Posterior cingulate gyrus (tissue), 11 donors: ENCODE measurements at regions of chr9 and their contacts with region 1.

Region 1: GRCh38 chr9:75265525-75265972 is 177.2 kb downstream of the OSTF1 start:
- DNase-seq: peak in 5 of 10 donors; percentile 12 to 49 (median 32)

Region 2: GRCh38 chr9:76302947-76303940 is 1037.7 kb after region 1 on chr9:
- intact Hi-C with region 1: loop called (anchors 2 kb)
- DNase-seq: no peak